PC-9 (cell line): ENCODE measurements at regions of chr17 and their contacts with region 1.

Region 1: DNA sequence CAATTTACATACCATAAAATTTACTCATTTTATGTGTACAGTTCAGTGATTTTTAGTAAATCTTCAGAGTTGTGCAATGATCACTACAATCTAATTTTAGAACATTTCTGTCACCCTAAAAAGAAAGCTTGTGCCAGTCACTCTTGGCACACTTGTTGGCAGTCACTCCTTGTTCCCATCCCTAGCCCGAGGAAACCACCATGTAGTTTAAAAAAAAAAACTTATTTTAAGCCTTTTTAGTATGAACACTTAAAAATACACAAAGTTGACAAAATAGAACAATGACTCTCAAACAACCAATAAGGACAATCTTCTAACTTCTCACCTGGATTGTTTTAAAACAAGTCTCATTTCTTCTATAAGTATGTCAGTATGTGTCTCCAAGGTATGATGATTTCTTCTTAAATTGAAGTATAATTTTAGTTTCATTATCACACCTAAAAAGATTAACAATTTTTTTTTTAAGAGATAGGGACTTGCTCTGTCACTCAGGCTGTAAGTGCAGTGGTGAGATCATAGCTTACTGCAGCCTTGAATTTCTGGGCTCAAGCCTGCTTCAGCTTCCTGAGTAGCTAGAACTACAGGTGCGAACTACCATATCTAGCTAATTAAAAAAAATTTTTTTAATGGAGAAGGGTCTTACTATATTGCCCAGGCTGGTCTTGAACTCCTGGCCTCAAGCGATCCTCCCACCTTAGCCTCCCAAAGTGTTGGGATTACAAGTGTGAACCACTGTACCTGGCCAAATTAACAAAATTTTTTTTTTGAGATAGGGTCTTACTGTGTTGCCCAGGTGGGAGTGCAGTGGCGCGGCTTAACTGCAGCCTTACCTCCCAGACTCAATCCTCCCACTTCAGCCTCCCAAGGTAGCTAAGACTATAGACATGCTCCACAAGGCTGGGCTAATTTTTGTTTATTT is 53.2 kb downstream of the PPM1E start:
- DNase-seq: no peak
- H3K4me3 ChIP-seq: no peak overlapping the region
- H3K27ac ChIP-seq: no peak overlapping the region
- H3K4me1 ChIP-seq: no peaks in the 10 kb centered on the region
- H3K27me3 ChIP-seq: no peaks in the 10 kb centered on the region
- CTCF ChIP-seq: no peak

Region 2: DNA sequence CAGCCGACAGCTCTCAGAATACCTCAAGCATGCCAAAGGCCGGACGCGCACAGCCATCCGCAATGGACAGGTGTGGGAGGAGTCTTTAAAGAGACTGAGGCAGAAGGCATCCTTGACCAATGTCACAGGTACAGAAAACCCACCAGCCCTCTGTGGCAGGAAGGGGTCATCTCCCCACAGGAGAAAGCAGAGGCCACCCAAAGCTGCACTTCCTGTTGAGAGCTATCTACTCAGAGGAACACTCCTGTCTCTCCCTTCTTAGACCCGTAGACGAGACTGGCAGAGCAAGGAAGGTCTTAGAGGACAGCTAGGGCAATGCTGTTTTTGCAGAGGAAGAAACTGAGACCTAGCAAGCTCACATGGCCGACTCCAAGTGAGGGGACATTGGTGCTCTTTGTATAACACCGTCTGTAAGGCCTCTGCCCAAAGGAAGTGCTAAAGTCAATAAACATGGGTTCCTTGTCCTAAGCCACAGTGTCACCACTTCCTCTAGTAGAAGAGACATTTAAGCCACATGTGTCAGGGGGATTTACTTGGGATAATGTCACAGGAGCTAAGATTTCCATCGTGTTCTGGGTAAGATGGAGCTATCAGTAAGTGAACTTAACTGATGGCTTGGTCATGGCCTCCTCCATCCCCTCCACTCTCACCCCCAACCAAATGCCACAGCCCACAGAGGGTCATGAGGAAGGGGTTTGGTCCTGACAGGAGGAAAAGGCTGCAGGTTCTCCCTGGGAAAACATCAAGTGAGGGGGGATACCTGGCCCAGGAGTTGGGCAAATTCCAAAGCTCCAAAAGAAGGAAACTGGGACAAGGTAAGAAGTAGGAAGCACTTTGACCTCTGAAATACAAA is 561.2 kb before region 1 on chr17:
- CTCF ChIA-PET with region 1: no interaction called
- POLR2A ChIA-PET with region 1: interaction called, 27 read pairs
- intact Hi-C with region 1: no loop called
- DNase-seq: no peak
- H3K4me3 ChIP-seq: no peak overlapping the region
- H3K27ac ChIP-seq: no peak overlapping the region
- H3K4me1 ChIP-seq: no peaks in the 10 kb centered on the region
- H3K27me3 ChIP-seq: peaks cover 96% of the 10 kb centered on the region
- CTCF ChIP-seq: no peak

Region 3: GRCh38 chr17:58822473-58823270 is 13.8 kb after region 1 on chr17:
- CTCF ChIA-PET with region 1: no interaction called
- POLR2A ChIA-PET with region 1: no interaction called
- intact Hi-C with region 1: no loop called
- DNase-seq: no peak
- H3K4me3 ChIP-seq: no peak overlapping the region
- H3K27ac ChIP-seq: no peak overlapping the region
- H3K4me1 ChIP-seq: no peaks in the 10 kb centered on the region
- H3K27me3 ChIP-seq: no peaks in the 10 kb centered on the region
- CTCF ChIP-seq: no peak